T-cell (primary cell): ENCODE measurements at regions of chr19 and their contacts with region 1.

Region 1: DNA sequence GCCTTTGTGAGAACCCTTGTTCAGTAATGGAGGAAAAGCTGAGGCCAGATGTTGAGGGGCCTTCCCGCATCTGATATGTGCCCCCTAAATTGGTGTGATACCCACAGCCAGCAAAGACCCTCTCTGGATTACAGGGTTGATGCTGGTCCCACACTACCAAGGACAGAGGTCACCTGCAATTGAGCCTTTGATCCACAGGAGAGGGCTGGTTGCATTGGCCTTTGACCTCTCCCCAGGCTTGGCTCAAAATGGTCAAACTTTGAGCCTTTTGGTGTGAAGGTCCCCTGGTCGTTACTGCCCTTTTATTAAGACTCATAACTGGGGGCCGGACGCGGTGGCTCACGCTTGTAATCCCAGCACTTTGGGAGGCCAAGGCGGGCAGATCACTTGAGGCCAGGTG is 8.4 kb upstream of the MRPL4 start:
- DNase-seq: no peak
- ATAC-seq: no peak
- H3K4me3 ChIP-seq: no peak overlapping the region
- H3K4me3 Mint-ChIP-seq: no peak overlapping the region
- H3K27ac ChIP-seq: no peak overlapping the region
- H3K27ac Mint-ChIP-seq: no peak overlapping the region
- H3K4me1 ChIP-seq: no peaks in the 10 kb centered on the region
- H3K4me1 Mint-ChIP-seq: peaks cover 0 to 2% (median 0%) of the 10 kb centered on the region in 3 donors
- H3K27me3 ChIP-seq: no peaks in the 10 kb centered on the region
- H3K27me3 Mint-ChIP-seq: no peaks in the 10 kb centered on the region

Region 2: DNA sequence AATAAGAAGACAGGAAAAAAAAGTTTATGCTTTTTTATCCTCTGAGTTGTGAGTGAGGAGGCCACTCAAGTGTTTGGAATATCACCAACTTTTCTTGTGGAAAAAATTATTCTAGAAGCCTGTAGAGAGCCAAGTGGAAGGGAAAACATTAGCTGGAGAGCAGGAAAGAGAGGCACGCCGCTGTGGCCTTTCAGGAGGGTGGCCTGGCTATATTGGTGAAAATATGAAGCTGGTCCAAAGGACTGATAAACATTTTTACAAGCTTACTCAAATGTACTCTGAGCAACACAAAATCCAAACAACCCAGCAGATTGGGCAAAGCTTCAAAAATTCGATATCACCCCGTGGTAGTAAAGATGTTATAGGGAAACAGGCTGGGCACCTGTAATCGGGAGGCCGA is 121.6 kb before region 1 on chr19:
- CTCF ChIA-PET with region 1: interaction called in 1 of 2 experiments, 12 read pairs
- POLR2A ChIA-PET with region 1: no interaction called
- DNase-seq: no peak
- ATAC-seq: no peak
- H3K4me3 ChIP-seq: no peak overlapping the region
- H3K4me3 Mint-ChIP-seq: no peak overlapping the region
- H3K27ac ChIP-seq: no peak overlapping the region
- H3K27ac Mint-ChIP-seq: no peak overlapping the region
- H3K4me1 ChIP-seq: peaks cover 10 to 31% of the 10 kb centered on the region in 2 experiments
- H3K4me1 Mint-ChIP-seq: peaks cover 12 to 22% (median 21%) of the 10 kb centered on the region in 3 donors
- H3K27me3 ChIP-seq: no peaks in the 10 kb centered on the region
- H3K27me3 Mint-ChIP-seq: no peaks in the 10 kb centered on the region

Region 3: DNA sequence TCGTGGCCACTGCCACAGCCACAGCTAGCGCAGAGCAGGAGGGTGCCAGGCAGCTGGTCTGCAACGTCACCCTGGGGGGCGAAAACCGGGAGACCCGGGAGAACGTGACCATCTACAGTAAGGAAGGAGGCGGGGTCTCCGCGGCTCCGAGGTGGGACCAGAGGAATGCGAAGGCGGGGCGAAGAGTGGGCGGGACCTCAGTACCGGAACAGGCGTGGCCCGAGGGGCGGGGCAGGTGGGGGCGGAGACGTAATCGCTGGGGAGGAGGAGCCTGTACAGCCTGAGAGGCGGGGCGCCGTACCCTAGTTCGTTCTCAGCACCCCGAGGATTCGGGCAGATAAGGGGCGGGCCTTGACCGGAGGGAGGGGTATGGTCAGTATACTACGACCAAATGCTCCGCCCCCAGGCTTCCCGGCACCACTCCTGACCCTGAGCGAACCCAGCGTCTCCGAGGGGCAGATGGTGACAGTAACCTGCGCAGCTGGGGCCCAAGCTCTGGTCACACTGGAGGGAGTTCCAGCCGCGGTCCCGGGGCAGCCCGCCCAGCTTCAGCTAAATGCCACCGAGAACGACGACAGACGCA is 48.7 kb after region 1 on chr19:
- CTCF ChIA-PET with region 1: no interaction called
- POLR2A ChIA-PET with region 1: no interaction called
- DNase-seq: peak in 29 of 35 experiments; percentile 31 to 74 (median 51)
- ATAC-seq: peak; percentile 20 to 52 (median 26)
- H3K4me3 ChIP-seq: peak overlapping the region; percentile 39 to 67
- H3K4me3 Mint-ChIP-seq: peak overlapping the region; percentile 70 to 88 (median 73)
- H3K27ac ChIP-seq: no peak overlapping the region
- H3K27ac Mint-ChIP-seq: peak overlapping the region in 1 of 2 donors; percentile 16
- H3K4me1 ChIP-seq: peaks cover 33 to 89% of the 10 kb centered on the region in 2 experiments
- H3K4me1 Mint-ChIP-seq: peaks cover 57 to 69% (median 66%) of the 10 kb centered on the region in 3 donors
- H3K27me3 ChIP-seq: peaks cover 15 to 93% of the 10 kb centered on the region in 2 experiments
- H3K27me3 Mint-ChIP-seq: peaks cover 33 to 78% of the 10 kb centered on the region in 2 donors